HCT116 (cell line): ENCODE measurements at regions of chr7 and their contacts with region 1.

Region 1: DNA sequence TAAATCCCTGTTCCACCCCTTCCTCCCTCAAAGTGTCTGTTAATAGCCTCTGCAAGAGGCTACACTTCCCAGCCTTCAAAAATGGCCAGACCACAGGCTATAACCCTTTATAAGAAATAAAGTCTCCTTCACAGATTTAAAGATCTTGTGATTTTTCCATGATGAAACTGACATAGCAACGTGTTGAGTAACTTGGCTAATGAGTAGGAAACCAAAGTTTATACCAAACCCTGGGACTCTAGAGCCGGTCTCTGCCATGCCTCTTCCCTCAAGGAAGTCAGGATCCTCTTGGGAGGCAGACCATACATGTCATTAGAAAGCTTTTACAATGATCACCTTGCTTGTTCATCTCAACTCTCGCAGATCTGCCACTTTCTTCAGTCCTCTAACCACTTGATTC is 44.4 kb downstream of the GRM8 start:
- DNase-seq: no peak
- ATAC-seq: no peak
- H3K4me3 ChIP-seq: no peak overlapping the region
- H3K27ac ChIP-seq: no peak overlapping the region
- H3K4me1 ChIP-seq: no peaks in the 10 kb centered on the region
- H3K27me3 ChIP-seq: peaks cover 71% of the 10 kb centered on the region
- CTCF ChIP-seq: no peak
- POLR2A ChIP-seq: no peak
- RAD21 ChIP-seq: no peak

Region 2: GRCh38 chr7:127460077-127460476 is 251.7 kb after region 1 on chr7:
- CTCF ChIA-PET with region 1: no interaction called
- POLR2A ChIA-PET with region 1: no interaction called
- RAD21 ChIA-PET with region 1: no interaction called
- intact Hi-C with region 1: loop called (anchors 1 kb)
- DNase-seq: no peak
- ATAC-seq: no peak
- H3K4me3 ChIP-seq: no peak overlapping the region
- H3K27ac ChIP-seq: no peak overlapping the region
- H3K4me1 ChIP-seq: no peaks in the 10 kb centered on the region
- H3K27me3 ChIP-seq: 0 out of 2 replicates have a peak, but pooled peaks cover 4% of the 10 kb centered on the region
- CTCF ChIP-seq: no peak
- POLR2A ChIP-seq: no peak
- RAD21 ChIP-seq: no peak